ENCODE measurements at regions of chr12 and their contacts with region 1.

Region 1: GRCh38 chr12:26113853-26114719 is 10.8 kb downstream of the BHLHE41 start:
- DNase-seq: peak; percentile 91 to 92
- H3K4me3 ChIP-seq: peak overlapping the region; percentile 57
- H3K27ac ChIP-seq: peak overlapping the region; percentile 93
- H3K4me1 ChIP-seq: peaks cover 61% of the 10 kb centered on the region
- H3K27me3 ChIP-seq: no peaks in the 10 kb centered on the region
- CTCF ChIP-seq: peak; percentile 46

Region 2: GRCh38 chr12:25757037-25757665 is 356.9 kb before region 1 on chr12:
- CTCF ChIA-PET with region 1: no interaction called
- POLR2A ChIA-PET with region 1: interaction called, 10 read pairs
- intact Hi-C with region 1: no loop called
- DNase-seq: no peak
- H3K4me3 ChIP-seq: no peak overlapping the region
- H3K27ac ChIP-seq: no peak overlapping the region
- H3K4me1 ChIP-seq: no peaks in the 10 kb centered on the region
- H3K27me3 ChIP-seq: no peaks in the 10 kb centered on the region
- CTCF ChIP-seq: no peak

Region 3: DNA sequence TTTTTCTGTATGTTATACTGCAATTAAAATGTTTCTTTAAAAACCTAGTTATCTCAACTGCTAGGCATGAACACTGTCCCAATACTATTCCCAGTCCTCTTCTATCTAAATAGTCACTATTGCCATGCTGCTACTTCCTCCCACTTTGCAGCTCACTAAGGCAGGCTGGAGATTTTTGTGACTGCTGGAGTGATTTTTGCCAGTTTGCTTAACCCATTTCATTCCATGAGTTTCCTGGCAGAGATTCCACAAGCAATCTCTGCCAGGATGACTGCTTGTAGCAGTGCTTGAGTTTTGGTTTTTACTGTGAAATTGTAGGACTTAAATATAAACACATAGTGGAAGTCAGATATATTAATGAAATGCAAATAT is 70.1 kb before region 1 on chr12:
- CTCF ChIA-PET with region 1: no interaction called
- POLR2A ChIA-PET with region 1: no interaction called
- intact Hi-C with region 1: loop called (anchors 5 kb)
- DNase-seq: no peak
- H3K4me3 ChIP-seq: no peak overlapping the region
- H3K27ac ChIP-seq: no peak overlapping the region
- H3K4me1 ChIP-seq: peaks cover 23% of the 10 kb centered on the region
- H3K27me3 ChIP-seq: no peaks in the 10 kb centered on the region
- CTCF ChIP-seq: no peak

Region 4: GRCh38 chr12:26281320-26281719 is 167.2 kb after region 1 on chr12:
- CTCF ChIA-PET with region 1: no interaction called
- POLR2A ChIA-PET with region 1: no interaction called
- intact Hi-C with region 1: no loop called
- DNase-seq: no peak
- H3K4me3 ChIP-seq: no peak overlapping the region
- H3K27ac ChIP-seq: no peak overlapping the region
- H3K4me1 ChIP-seq: peaks cover 7% of the 10 kb centered on the region
- H3K27me3 ChIP-seq: no peaks in the 10 kb centered on the region
- CTCF ChIP-seq: no peak

Region 5: GRCh38 chr12:26309646-26310045 is 195.6 kb after region 1 on chr12:
- CTCF ChIA-PET with region 1: no interaction called
- POLR2A ChIA-PET with region 1: no interaction called
- intact Hi-C with region 1: no loop called
- DNase-seq: no peak
- H3K4me3 ChIP-seq: no peak overlapping the region
- H3K27ac ChIP-seq: no peak overlapping the region
- H3K4me1 ChIP-seq: no peaks in the 10 kb centered on the region
- H3K27me3 ChIP-seq: no peaks in the 10 kb centered on the region
- CTCF ChIP-seq: no peak

Measured in PC-9 (cell line).